Right ventricle myocardium inferior (tissue), 1 donor: ENCODE measurements at regions of chr3 and their contacts with region 1.

Region 1: DNA sequence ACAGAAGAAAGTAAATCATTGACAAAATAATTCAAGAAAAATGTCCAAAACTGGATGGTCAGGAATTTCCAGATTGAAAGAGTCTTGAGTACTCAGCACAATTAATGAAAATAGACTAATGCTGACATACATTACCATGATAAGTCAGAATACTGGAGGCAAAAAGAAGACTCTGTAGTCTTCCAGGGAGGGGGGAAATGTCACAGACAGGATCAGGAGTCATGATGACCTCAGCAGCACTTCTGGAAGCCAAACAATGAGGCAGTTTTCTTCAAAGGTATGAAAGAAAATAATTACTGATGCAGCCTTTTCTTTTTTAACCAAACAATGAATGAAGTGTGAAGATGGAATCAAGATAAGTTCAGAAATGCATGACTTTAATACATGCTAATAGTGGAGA is 30.1 kb upstream of the SLC22A13 start:
- DNase-seq: no peak
- ATAC-seq: no peak

Region 2: DNA sequence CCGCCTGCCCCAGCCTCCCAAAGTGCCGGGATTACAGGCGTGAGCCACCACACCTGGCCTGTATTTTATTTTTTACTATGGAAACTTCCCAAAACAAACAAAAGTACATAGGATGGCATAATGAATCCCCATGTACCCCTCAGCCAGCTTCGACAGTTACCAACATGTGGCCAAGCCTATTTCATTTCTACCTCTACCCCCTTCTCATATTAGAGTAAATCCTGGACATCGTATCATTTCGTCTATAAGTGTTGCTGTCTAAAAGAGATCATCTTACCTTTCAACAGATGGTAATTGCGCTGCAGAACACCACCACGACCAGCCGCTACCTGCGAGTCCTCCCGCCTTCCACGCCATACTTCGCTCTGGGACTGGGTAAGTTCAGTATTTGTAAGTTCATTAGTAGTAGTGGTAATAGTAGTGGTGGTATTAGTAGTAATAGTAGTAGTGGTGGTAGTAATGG is 151.6 kb before region 1 on chr3:
- intact Hi-C with region 1: no loop called
- DNase-seq: no peak
- ATAC-seq: no peak

Region 3: DNA sequence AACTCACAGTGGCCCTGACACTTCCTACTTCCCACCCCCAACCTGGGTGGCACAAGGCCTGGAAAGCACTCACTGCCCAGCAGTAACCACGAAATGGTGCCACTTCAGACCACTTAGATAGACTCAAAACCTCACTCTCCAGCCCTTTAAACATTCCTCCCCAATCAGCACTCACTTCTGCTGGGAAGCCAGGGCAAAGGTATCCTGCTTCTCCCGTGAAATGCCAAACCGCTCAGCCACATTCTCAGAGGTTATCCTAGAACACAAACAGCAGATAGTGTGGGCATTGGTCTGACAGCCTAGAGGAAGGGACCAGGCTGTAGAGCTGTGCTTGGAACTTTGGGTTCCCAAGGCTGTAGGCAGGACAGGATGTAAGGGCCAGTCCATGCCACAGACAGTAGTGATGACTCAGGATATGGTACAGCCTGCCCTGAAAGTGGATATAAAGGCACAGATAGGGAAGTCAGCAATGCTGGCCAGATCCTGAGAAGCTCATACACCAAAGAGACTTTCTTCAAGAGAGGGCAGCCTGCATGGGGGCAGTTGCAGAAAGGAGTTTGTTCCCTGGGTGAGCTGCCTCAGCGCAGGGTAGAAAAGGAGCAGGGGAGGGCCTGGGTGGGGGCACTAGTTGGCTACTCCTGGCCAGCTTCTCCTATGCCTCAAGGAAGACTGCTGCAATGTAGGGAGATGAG is 107.7 kb before region 1 on chr3:
- intact Hi-C with region 1: loop called (anchors 5 kb)
- DNase-seq: peak; percentile 26
- ATAC-seq: peak; percentile 53

Region 4: DNA sequence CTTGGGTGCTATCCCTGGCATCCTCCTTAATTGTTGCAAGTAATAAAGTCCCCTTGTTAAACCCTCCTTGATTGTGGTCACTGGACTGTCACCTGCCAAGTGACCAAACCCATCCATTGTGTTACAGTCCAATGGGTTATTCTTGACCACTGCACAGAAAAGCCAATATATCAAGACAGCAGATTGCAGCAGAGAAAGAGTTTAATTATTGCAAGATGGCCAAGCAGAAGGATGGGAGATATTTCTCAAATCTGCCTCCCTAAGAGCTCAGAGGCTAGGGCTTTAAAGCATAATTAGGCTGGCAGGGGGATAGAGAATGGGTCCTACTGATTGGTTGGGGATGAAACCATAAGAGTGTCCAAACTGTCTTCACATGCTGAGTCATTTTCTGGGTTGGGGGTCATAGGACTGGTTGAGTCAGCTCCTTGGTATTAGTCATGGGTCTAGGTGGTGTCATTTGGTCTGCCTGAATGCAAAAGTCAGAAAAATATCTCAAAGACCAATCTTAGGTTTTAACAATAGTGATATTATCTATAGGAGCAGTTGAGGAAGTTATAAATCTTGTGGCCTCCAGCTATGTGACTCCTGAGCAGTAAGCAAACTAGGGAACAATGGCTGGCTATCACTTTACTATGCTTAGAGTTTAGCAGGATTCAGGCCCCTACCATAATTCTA is 92.0 kb after region 1 on chr3:
- intact Hi-C with region 1: no loop called
- DNase-seq: no peak
- ATAC-seq: no peak

Region 5: GRCh38 chr3:38487323-38487722 is 251.9 kb after region 1 on chr3:
- intact Hi-C with region 1: no loop called
- DNase-seq: no peak
- ATAC-seq: no peak

Region 6: GRCh38 chr3:38500688-38501417 is 265.4 kb after region 1 on chr3:
- intact Hi-C with region 1: no loop called
- DNase-seq: no peak
- ATAC-seq: peak; percentile 73